Ovary (tissue), 10 donors: ENCODE measurements at regions of chr18 and their contacts with region 1.

Region 1: DNA sequence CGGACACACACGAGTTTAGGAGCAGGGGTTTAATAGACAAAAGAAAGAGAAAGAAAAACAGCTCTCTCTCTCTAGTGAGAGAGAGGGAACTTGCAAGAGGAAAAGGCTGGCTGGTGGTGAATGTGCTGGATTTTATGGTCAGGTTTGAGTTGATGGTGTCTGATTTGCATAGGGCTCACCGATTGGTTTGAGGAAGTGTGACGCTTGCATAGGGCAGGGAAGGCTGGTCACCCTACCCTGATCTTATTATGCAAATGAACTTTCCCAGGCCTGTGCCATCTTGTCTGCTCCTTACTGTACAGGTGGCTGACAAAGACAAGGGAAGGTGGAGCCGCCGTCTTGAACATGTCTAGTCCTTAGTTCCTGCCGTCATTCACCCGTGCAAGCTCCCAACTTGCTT is 408.9 kb downstream of the RIT2 start:
- DNase-seq: no peak
- H3K4me3 ChIP-seq: no peak overlapping the region
- H3K27ac ChIP-seq: no peak overlapping the region
- H3K4me1 ChIP-seq: no peaks in the 10 kb centered on the region
- H3K27me3 ChIP-seq: no peaks in the 10 kb centered on the region
- CTCF ChIP-seq: no peak
- EP300 ChIP-seq: no peak
- POLR2A ChIP-seq: no peak

Region 2: DNA sequence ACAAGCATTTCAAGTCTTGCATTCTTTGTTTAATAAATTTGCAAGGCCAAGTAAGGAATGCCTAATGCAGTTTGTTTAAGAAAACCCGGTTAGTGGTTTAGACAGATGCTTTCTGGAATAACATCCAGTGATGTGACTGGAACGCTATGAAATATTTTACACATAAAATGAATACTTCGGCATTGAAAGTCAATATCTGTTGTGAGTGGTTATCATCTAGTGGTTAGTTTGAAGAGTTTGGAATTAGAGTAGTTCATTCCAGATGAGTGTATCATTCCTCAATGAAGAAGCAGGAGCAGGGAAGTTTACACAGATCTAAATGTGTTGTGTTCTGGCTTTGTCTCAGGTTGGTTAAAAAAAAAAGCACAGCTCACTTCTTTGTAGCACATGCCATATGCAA is 1359.6 kb before region 1 on chr18:
- intact Hi-C with region 1: no loop called
- DNase-seq: no peak
- H3K4me3 ChIP-seq: no peak overlapping the region
- H3K27ac ChIP-seq: no peak overlapping the region
- H3K4me1 ChIP-seq: no peaks in the 10 kb centered on the region
- H3K27me3 ChIP-seq: no peaks in the 10 kb centered on the region
- CTCF ChIP-seq: no peak
- EP300 ChIP-seq: no peak
- POLR2A ChIP-seq: no peak

Region 3: GRCh38 chr18:42426496-42427015 is 280.1 kb before region 1 on chr18:
- intact Hi-C with region 1: loop called in 1 of 4 experiments (anchors 10 kb)
- DNase-seq: no peak
- H3K4me3 ChIP-seq: no peak overlapping the region
- H3K27ac ChIP-seq: no peak overlapping the region
- H3K4me1 ChIP-seq: no peaks in the 10 kb centered on the region
- H3K27me3 ChIP-seq: no peaks in the 10 kb centered on the region
- CTCF ChIP-seq: no peak
- EP300 ChIP-seq: no peak
- POLR2A ChIP-seq: no peak

Region 4: DNA sequence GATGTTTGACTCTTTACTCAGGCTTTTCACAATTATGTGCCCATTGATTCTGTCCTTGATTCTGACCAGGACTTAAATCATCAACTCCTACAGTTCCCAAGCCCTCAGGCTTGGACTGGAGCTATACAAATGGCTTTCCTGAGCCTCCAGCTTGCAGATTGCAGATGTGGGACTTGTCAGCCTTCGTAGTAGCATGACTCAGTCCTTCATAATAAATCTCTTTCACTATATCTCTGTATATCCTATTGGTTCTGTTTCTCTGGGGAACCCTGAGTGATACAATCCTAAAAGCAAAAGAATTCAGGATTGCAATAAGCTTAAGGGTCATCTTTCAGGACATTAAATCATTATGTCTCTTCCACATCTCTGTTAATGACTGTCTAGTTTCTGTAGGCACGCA is 52.2 kb after region 1 on chr18:
- intact Hi-C with region 1: no loop called
- DNase-seq: no peak
- H3K4me3 ChIP-seq: no peak overlapping the region
- H3K27ac ChIP-seq: no peak overlapping the region
- H3K4me1 ChIP-seq: no peaks in the 10 kb centered on the region
- H3K27me3 ChIP-seq: no peaks in the 10 kb centered on the region
- CTCF ChIP-seq: no peak
- EP300 ChIP-seq: no peak
- POLR2A ChIP-seq: no peak